ENCODE measurements at regions of chr1 and their contacts with region 1.

Region 1: GRCh38 chr1:61049850-61050540 is 32.4 kb upstream of the NFIA start:
- DNase-seq: peak; percentile 92 to 96 (median 94)
- ATAC-seq: peak; percentile 91
- H3K4me3 ChIP-seq: peak overlapping the region; percentile 80 to 83
- H3K27ac ChIP-seq: peak overlapping the region; percentile 90 to 94
- H3K4me1 ChIP-seq: peaks cover 20 to 46% of the 10 kb centered on the region in 2 donors
- H3K27me3 ChIP-seq: peaks cover 0 to 50% of the 10 kb centered on the region in 2 donors
- CTCF ChIP-seq: peak; percentile 93 to 97

Region 2: DNA sequence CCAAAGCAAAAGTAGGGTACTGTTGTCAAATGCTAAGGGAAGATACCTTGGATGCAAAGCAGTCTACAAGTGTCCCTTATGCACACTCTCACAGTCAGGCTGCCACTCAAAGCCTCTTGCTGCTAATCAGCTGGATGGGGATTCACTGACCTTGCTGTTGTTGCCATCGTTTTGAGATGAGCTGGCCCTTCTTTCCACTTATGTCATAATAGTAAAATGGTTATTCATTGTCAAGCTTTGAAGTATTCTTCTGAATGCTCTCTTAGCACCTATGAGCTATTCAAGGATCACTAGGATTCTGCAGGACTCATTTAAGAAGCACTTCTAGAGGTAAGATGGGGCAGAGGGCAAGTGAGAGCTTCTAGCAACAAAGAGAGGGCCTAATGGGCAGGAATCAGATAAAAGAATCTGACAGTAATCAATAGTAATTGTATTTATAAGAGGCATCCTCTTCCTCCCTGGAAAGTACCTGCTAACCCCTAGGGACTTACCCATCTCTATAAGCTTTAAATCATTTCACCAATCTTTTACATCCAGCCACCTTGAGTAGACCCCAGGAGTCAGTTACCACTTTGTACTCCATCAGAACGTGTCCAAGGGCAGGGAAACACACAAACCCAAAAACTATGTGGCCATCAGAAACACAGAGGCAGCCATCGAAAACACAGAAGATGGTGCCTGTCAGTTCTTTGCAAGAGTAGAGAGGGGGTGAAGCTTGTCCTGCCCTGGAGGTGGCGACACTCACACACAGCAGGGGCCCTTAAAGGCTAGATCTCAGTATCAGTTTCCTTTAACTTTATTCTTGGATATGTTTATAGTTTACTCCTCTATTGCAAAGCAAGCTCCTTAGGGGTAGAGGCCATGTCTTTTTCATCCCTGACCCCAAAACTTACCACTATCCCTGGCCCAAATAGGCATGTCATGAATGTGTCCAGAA is 71.3 kb before region 1 on chr1:
- intact Hi-C with region 1: loop called in 1 of 2 experiments (anchors 10 kb)
- DNase-seq: peak in 1 of 4 donors; percentile 36
- ATAC-seq: peak; percentile 89
- H3K4me3 ChIP-seq: no peak overlapping the region
- H3K27ac ChIP-seq: no peak overlapping the region
- H3K4me1 ChIP-seq: no peaks in the 10 kb centered on the region
- H3K27me3 ChIP-seq: no peaks in the 10 kb centered on the region
- CTCF ChIP-seq: peak; percentile 45 to 52

Region 3: GRCh38 chr1:61337981-61338848 is 288.2 kb after region 1 on chr1:
- intact Hi-C with region 1: loop called in 1 of 2 experiments (anchors 10 kb)
- DNase-seq: peak in 3 of 4 donors; percentile 70 to 82 (median 79)
- ATAC-seq: peak; percentile 97
- H3K4me3 ChIP-seq: peak overlapping the region in 1 of 2 donors; percentile 8
- H3K27ac ChIP-seq: peak overlapping the region; percentile 69 to 77
- H3K4me1 ChIP-seq: peaks cover 0 to 20% of the 10 kb centered on the region in 2 donors
- H3K27me3 ChIP-seq: no peaks in the 10 kb centered on the region
- CTCF ChIP-seq: peak; percentile 52 to 58

Region 4: GRCh38 chr1:61453111-61453961 is 403.3 kb after region 1 on chr1:
- intact Hi-C with region 1: loop called in 1 of 2 experiments (anchors 10 kb)
- DNase-seq: peak in 3 of 4 donors; percentile 86 to 94 (median 88)
- ATAC-seq: peak; percentile 96
- H3K4me3 ChIP-seq: no peak overlapping the region
- H3K27ac ChIP-seq: peak overlapping the region; percentile 10 to 85
- H3K4me1 ChIP-seq: peaks cover 17 to 38% of the 10 kb centered on the region in 2 donors
- H3K27me3 ChIP-seq: no peaks in the 10 kb centered on the region
- CTCF ChIP-seq: peak; percentile 63 to 68

Region 5: DNA sequence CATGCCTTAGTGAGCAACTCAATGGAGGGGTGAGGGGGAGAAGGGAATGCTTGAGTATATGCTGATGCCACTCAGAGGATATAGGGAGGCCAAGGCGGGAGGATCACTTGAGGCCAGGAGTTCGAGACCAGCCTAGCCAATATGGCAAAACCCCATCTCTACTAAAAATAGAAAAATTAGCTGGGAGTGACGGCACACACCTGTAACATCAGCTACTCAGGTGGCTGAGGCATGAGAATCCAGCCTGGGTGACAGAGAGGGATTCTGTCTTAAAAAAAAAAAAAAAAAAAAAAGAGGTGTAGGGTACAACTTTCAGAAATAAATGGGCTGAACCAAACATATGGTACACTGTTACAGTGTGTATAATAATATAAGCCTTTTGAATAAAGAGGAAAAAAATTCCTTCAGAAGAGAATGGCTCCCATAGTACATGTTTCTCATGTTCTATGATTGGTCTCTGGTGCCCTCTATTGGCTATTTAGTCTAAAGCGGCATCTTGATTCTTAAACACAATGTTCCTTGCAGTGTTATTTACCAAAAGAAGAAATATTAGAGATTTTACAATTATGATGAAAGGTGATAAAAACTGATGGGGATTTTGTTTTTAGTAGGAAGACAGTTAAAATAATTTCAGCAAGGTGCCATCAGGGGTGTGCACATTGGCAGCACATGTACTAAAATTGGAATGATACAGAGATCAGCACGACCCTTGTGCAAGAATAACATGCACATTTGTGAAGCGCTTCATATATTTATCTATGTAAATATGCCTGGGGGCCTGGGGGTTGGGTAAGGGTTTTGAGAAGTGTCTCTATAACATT is 802.1 kb after region 1 on chr1:
- intact Hi-C with region 1: loop called in 1 of 2 experiments (anchors 10 kb)
- DNase-seq: peak in 2 of 4 donors; percentile 61 to 80
- ATAC-seq: peak; percentile 84
- H3K4me3 ChIP-seq: no peak overlapping the region
- H3K27ac ChIP-seq: no peak overlapping the region
- H3K4me1 ChIP-seq: peaks cover 0 to 4% of the 10 kb centered on the region in 2 donors
- H3K27me3 ChIP-seq: no peaks in the 10 kb centered on the region
- CTCF ChIP-seq: peak; percentile 58 to 70

Measured in left lung (tissue), 14 donors.